Left colon (tissue), 2 donors: ENCODE measurements at regions of chr15 and their contacts with region 1.

Region 1: GRCh38 chr15:78177447-78177873 is 28.3 kb downstream of the IDH3A start:
- DNase-seq: peak in 1 of 2 donors; percentile 64
- ATAC-seq: peak; percentile 58

Region 2: DNA sequence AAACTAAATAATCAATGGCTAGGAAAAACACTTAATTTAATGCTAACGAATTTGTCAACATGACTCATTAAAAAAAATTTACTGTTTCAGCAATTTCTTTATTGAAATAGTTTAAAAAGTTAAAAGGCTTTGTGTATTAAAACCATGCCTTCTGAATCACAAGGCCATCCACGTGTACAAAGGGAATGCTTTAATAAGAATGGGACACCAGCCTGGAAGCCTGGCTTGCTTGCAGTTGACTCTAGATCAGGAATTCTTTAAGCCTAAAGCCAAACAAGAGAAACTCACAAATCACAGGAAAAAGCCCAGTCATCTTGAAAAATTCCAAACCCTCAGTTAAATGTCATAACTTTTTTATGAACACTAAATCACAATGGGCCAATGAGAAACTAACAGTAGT is 895.1 kb before region 1 on chr15:
- intact Hi-C with region 1: no loop called
- DNase-seq: peak in 1 of 2 donors; percentile 7
- ATAC-seq: no peak

Region 3: DNA sequence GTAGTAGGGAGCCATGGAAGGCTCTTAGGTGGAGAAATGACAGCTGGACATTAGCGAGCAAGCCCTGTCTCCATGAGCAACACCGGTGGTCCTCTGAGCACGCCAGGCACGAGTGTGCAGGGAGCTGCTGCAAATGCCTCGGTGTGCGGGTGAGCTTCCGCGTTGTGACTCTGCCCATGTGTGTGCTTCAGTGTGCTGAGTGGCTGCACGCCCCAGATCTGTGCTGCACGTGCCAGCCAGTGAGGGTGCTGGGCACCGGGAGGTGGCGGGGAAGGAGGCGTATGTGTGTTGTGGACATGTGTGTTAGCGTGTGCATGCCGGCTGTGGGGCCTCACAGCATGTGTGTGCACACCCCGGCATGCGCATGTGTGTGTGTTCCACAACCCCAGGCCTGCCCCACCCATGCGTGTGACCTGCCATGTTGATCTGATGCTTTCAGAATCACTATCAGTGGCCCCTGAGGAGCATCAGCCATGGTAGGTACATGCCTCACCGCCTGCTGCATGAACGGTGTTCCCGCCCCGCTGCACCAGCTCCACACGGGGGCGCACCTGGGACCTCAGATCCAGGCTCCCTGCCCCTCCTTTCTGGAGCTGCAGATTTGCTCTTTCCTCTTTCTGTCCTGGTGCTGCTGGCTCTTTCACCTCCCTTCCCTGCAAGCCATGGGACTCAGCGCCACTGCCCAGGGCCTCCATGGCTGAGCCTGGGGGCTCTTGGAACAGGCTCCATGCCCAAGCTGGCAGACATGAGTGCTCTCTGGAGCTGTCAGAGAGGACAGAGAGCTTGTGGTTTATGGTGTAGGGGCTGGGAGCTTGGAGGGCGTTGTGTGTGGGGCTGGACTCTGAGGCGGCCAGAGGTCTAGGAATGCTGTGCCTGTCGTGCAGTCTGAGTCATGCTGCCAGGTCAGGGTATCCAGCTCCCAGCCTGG is 269.4 kb before region 1 on chr15:
- intact Hi-C with region 1: no loop called
- DNase-seq: peak; percentile 54 to 77
- ATAC-seq: peak; percentile 68

Region 4: GRCh38 chr15:78131295-78132061 is 46.0 kb before region 1 on chr15 and contains the start of gene CIB2:
- intact Hi-C with region 1: no loop called
- DNase-seq: peak in 1 of 2 donors; percentile 80
- ATAC-seq: peak; percentile 85
- total RNA-seq, gene CIB2: 12.0 to 19.7 TPM

Region 5: GRCh38 chr15:78241007-78241406 is 63.5 kb after region 1 on chr15:
- intact Hi-C with region 1: loop called in 1 of 2 experiments (anchors 5 kb)
- DNase-seq: peak; percentile 73 to 92
- ATAC-seq: peak; percentile 76